ENCODE measurements at regions of chrX and their contacts with region 1.

Region 1: DNA sequence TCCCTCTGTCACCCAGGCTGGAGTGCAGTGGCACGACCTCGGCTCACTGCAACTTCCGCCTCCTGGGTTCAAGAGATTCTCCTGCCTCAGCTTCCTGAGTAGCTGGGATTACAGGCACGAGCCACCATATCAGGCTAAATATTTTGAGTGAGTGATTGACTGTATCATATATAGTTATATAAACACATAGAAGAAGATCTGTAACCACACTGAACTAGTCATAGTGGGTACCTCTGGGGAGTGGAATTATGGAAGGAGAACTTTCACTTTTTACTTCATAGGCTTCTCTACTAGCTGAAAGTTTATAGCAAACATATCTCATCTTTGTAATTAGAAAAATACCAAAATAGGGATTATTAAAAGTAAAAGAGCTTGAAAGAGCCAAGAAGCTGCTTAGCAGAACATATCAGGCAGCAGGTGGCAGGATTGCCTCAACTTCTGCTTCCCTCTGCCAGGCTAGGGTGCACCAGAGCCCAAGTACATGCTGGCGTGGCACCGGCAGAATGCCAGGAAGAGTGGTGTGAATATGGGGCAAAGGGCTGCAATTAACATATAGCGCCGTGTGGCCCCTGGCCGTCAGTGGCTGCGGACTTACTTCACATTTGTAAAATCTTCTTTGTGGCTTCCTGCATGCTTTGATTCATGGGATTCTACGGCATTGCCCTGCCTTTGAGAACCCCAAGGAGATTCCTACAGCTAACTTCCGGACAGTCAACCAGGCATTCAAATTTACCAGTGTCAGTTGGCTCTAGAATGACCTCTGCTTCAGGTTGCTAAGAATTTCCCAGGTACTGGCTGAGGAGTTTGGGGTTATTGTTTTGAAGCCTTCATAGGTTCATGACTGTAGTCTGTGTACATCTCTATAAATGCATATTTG is 39.4 kb upstream of the CD40LG start:
- DNase-seq: peak; percentile 29
- H3K4me3 ChIP-seq: no peak overlapping the region
- H3K27ac ChIP-seq: no peak overlapping the region
- H3K4me1 ChIP-seq: no peaks in the 10 kb centered on the region
- H3K27me3 ChIP-seq: no peaks in the 10 kb centered on the region
- CTCF ChIP-seq: peak; percentile 30

Region 2: DNA sequence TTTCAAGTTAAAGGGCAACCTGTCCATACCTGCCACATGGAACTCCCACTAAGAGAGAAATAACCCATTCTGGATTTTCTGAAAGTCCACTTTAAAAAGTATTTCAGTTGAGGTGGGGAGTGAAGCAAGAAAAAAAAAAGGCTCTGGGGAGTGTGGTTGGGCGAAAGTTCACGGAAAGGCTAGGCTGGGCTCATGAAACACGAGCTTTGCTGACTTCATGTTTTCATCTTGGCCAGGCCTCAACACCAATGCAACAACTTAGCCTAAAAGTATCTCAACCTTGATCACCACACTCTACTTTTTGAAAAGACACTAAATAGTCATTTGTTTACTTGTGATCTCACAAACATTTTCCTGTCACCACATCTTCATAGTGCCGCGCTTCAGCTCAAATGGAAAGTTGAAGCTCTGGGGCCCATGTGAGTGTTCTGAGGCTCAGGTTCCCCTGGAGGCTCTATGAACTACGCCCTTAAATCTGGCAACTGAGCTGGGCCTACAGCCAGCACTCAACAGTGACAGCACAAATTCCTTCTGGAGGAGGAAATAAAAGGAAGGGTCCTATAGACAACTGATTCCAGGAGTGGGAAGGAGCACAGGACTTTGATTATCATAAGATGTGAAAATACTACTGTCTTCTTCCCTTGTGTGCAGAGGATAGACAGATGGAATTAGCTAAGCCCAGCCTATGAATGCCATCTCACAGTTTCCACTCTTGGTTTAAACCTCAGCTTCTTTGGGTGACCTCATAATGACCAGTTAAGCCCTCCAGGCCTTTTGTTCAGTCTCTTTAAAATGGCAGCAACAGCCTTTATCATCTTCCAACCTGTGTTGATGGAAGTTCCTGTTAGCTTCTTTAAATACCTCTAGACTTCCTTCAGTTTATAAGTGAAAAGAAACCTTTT is 44.5 kb after region 1 on chrX:
- intact Hi-C with region 1: no loop called
- DNase-seq: no peak
- H3K4me3 ChIP-seq: no peak overlapping the region
- H3K27ac ChIP-seq: no peak overlapping the region
- H3K4me1 ChIP-seq: no peaks in the 10 kb centered on the region
- H3K27me3 ChIP-seq: no peaks in the 10 kb centered on the region
- CTCF ChIP-seq: no peak

Region 3: GRCh38 chrX:136689436-136689835 is 80.9 kb after region 1 on chrX:
- intact Hi-C with region 1: loop called (anchors 10 kb)
- DNase-seq: no peak
- H3K4me3 ChIP-seq: no peak overlapping the region
- H3K27ac ChIP-seq: no peak overlapping the region
- H3K4me1 ChIP-seq: no peaks in the 10 kb centered on the region
- H3K27me3 ChIP-seq: no peaks in the 10 kb centered on the region
- CTCF ChIP-seq: no peak

Region 4: GRCh38 chrX:136907621-136908020 is 299.1 kb after region 1 on chrX:
- intact Hi-C with region 1: no loop called
- DNase-seq: no peak
- H3K4me3 ChIP-seq: no peak overlapping the region
- H3K27ac ChIP-seq: no peak overlapping the region
- H3K4me1 ChIP-seq: no peaks in the 10 kb centered on the region
- H3K27me3 ChIP-seq: no peaks in the 10 kb centered on the region
- CTCF ChIP-seq: no peak

Region 5: DNA sequence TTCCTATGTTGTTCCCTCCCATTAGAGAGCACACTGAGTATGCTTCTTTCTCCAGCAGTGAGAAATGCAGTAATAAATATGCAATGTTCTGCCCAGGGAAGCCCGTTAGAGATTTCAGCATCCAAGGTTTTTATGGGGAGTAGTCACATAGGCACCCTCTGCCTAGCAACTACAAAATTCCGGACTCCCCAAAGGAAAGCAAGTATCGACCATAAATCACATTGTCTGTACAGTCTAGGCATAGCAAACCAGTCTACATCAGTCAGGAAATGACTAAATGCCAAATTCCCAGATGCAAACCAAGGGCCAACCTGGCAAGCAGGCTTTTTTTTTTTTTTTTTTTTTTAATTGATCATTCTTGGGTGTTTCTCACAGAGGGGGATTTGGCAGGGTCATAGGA is 390.5 kb after region 1 on chrX:
- intact Hi-C with region 1: no loop called
- DNase-seq: no peak
- H3K4me3 ChIP-seq: no peak overlapping the region
- H3K27ac ChIP-seq: no peak overlapping the region
- H3K4me1 ChIP-seq: no peaks in the 10 kb centered on the region
- H3K27me3 ChIP-seq: no peaks in the 10 kb centered on the region
- CTCF ChIP-seq: no peak

Region 6: DNA sequence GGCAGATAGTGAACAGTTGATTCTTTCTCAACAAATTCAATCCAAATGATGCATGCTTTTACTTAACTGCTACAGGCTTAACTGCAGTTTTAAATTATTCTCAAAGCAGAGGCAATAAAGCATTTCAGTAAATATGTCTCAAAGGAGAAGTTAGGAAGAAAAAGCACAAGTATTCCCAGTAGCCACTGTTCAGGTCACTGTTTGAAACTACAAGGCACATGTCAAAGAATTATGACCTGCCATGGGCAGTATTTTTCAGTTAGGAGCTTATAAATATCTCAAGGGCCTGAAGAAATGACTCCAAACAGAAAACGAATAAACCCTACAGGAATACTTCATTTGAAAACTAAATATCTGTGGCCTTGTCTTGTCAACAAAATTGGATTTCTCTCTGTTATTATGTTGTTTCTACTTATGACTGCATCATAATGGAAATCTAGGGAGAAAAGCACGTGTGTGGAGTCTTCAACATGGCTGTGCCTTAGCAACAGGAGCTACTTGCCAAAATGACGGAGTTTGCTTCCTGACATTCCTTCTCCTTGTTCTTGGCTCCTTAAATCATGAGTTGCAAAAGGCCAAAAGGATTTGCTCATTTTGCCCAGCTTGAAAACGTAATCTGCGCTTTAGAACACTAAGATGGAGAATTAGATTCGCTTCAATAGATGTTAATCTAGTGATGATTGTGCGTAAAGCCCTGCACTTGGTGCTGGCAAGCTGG is 492.9 kb after region 1 on chrX:
- intact Hi-C with region 1: no loop called
- DNase-seq: no peak
- H3K4me3 ChIP-seq: no peak overlapping the region
- H3K27ac ChIP-seq: no peak overlapping the region
- H3K4me1 ChIP-seq: no peaks in the 10 kb centered on the region
- H3K27me3 ChIP-seq: no peaks in the 10 kb centered on the region
- CTCF ChIP-seq: no peak